Activated B cell treated with CpG ODN at 0.5 μM for 24 hours (primary cell): ENCODE measurements at regions of chrX and their contacts with region 1.

Region 1: DNA sequence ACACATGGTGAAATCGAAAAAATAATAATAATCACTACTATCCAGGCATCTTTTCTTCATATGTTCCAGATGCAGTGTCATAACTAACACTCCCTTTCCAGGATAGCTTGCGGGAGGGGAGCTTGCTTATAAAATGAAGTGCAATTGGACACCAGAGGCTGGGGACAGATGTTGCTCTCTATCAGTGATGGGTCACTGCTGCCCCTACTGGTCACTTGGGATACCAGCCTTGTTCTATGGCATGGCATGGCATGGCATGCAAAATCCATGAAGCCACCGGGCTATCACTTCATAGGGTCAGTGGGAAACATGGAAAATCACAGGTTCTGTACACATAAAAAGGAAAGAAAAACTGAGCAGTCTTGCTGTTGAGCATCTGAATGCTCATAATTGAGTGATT is 168.1 kb downstream of the GLRA2 start:
- DNase-seq: no peak
- ATAC-seq: no peak
- H3K4me3 Mint-ChIP-seq: no peak overlapping the region
- H3K27ac Mint-ChIP-seq: no peak overlapping the region
- H3K4me1 Mint-ChIP-seq: no peaks in the 10 kb centered on the region
- H3K27me3 Mint-ChIP-seq: no peaks in the 10 kb centered on the region
- CTCF ChIP-seq: no peak

Region 2: DNA sequence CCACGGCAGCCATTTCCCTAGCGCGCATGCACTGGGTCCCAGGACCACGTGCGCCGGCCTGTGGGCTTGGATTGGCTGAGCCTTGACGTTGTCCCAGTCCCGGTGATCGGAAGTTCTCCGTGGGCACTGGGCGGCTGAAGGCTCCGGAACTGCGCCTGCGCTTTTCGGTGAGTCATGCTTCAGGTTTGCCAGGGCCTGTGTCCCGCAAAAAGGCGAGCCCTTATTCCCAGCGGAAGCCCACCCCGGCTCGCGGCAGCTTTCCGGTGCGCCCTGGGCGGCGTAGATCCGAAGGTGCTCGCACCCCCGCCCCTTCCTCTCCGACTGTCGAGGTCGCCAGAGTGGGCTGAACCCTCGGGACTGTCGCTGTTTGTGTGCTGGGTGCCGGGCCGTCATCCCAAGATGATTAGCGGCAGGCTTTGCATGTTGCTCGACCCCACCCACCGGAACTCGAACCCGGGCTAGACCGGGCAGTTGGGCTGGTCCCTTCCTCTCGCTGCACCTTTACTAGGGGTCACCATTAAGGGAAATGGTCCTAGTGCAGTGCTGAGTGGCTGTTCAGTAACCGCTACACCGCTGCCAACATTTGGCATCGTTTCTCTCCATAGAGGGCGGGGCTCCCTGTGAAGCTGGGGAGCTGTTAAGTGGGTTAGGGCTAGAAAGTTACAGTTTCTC is 1044.3 kb before region 1 on chrX and contains the start of gene TCEANC:
- CTCF ChIA-PET with region 1: no interaction called
- POLR2A ChIA-PET with region 1: no interaction called
- intact Hi-C with region 1: no loop called
- DNase-seq: peak; percentile 79
- ATAC-seq: peak; percentile 93
- H3K4me3 Mint-ChIP-seq: peak within 1 kb of the TSS; percentile 91
- H3K27ac Mint-ChIP-seq: peak within 1 kb of the TSS; percentile 91
- H3K4me1 Mint-ChIP-seq: peaks cover 13% of the 10 kb centered on the region
- H3K27me3 Mint-ChIP-seq: no peaks in the 10 kb centered on the region
- CTCF ChIP-seq: no peak
- total RNA-seq, gene TCEANC: 5.1 and 5.9 TPM in 2 replicates

Region 3: GRCh38 chrX:14533867-14534266 is 163.6 kb before region 1 on chrX:
- CTCF ChIA-PET with region 1: no interaction called
- POLR2A ChIA-PET with region 1: no interaction called
- intact Hi-C with region 1: loop called (anchors 10 kb)
- DNase-seq: no peak
- ATAC-seq: no peak
- H3K4me3 Mint-ChIP-seq: no peak overlapping the region
- H3K27ac Mint-ChIP-seq: no peak overlapping the region
- H3K4me1 Mint-ChIP-seq: peaks cover 2% of the 10 kb centered on the region
- H3K27me3 Mint-ChIP-seq: peaks cover 4% of the 10 kb centered on the region
- CTCF ChIP-seq: no peak

Region 4: DNA sequence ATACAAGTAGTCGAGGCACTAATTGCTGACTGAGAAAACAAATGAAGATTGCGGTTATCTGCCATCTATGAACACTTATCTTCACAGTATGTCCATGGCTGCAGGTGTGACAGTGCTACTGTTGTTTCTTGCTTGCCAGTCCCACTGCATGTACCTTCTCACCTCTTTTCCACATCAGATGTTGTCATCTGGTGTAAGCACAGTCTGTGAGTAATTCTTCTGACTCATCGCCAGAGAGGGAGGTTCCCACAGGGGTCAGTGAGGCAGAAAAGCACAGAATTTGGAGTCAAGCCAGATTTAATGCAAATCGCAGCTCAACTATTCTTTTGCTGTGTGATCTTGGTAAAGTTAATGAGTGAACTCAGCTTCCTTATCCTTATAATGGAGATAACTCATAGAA is 23.7 kb before region 1 on chrX:
- CTCF ChIA-PET with region 1: no interaction called
- POLR2A ChIA-PET with region 1: no interaction called
- intact Hi-C with region 1: no loop called
- DNase-seq: peak; percentile 12
- ATAC-seq: peak; percentile 90
- H3K4me3 Mint-ChIP-seq: peak overlapping the region; percentile 35
- H3K27ac Mint-ChIP-seq: peak overlapping the region; percentile 80
- H3K4me1 Mint-ChIP-seq: peaks cover 56% of the 10 kb centered on the region
- H3K27me3 Mint-ChIP-seq: no peaks in the 10 kb centered on the region
- CTCF ChIP-seq: no peak